Naive thymus-derived CD4-positive, alpha-beta T cell (primary cell): ENCODE measurements at regions of chr2 and their contacts with region 1.

Region 1: GRCh38 chr2:120223034-120223912 is at the start of gene TMEM185B:
- DNase-seq: peak; percentile 83 to 96 (median 90)
- ATAC-seq: peak; percentile 97
- H3K4me3 ChIP-seq: peak within 1 kb of the TSS; percentile 74
- H3K4me3 Mint-ChIP-seq: peak within 1 kb of the TSS; percentile 83 to 91 (median 88)
- H3K27ac ChIP-seq: peak within 1 kb of the TSS; percentile 94
- H3K27ac Mint-ChIP-seq: peak within 1 kb of the TSS; percentile 85 to 92 (median 91)
- H3K4me1 ChIP-seq: peaks cover 20 to 23% of the 10 kb centered on the region in 2 donors
- H3K4me1 Mint-ChIP-seq: peaks cover 34 to 67% (median 56%) of the 10 kb centered on the region in 7 donors
- H3K27me3 ChIP-seq: no peaks in the 10 kb centered on the region
- H3K27me3 Mint-ChIP-seq: no peaks in the 10 kb centered on the region
- total RNA-seq, gene TMEM185B: 14.9 to 36.8 (median 19.5) TPM

Region 2: DNA sequence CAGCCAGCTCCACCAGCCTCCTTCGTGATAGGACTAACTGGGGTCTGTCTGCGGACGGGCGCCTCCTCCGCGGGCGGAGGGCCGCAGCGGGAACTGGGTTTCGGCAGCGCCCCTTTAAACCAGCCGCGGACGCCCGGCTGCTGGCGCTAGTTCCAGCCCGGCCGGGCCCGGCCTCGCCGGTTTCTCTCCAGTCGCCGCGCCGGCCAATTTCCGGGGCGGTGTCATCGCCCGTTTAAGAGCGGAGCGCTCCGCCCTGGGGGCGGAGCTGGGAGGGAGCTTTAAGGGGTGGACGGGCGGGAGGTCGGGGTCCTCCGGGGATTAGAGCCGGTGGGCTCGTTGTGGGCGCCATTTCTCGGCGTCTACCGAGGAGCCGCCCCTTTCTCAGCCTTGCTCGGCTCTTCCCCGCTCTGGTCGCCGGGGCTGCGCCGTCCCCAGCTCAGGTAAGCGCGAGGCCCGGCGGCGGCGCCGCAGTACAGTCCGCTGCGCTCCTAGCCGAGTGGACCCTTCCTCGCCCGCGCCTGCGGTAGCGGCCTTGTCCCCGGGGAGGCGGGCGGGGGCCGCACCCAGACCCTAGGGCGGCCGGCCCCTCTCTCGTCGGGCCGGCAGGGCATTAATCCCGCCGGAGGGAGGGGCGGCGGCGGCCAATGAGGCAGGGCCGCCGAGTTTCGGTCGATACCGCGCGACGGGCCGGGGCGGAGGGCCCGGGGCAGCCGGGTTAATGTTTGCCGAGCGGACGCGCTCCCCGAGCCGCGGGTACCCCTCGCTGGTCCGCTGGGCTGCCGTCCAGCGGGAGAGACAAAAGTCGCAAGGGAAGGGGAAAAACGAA is 210.3 kb before region 1 on chr2 and contains the start of gene EPB41L5:
- CTCF ChIA-PET with region 1: no interaction called
- POLR2A ChIA-PET with region 1: no interaction called
- intact Hi-C with region 1: loop called in 1 of 2 experiments (anchors 2 kb)
- DNase-seq: peak; percentile 56 to 81 (median 67)
- ATAC-seq: peak; percentile 93
- H3K4me3 ChIP-seq: peak within 1 kb of the TSS; percentile 69
- H3K4me3 Mint-ChIP-seq: peak within 1 kb of the TSS; percentile 73 to 89 (median 86)
- H3K27ac ChIP-seq: peak within 1 kb of the TSS; percentile 70
- H3K27ac Mint-ChIP-seq: peak within 1 kb of the TSS in 8 of 9 donors; percentile 36 to 75 (median 70)
- H3K4me1 ChIP-seq: peaks cover 6% of the 10 kb centered on the region in 2 donors
- H3K4me1 Mint-ChIP-seq: peaks cover 8 to 37% (median 24%) of the 10 kb centered on the region in 7 donors
- H3K27me3 ChIP-seq: no peaks in the 10 kb centered on the region
- H3K27me3 Mint-ChIP-seq: peaks cover 0 to 20% (median 0%) of the 10 kb centered on the region in 5 donors
- total RNA-seq, gene EPB41L5: 2.2 to 9.3 (median 6.8) TPM

Region 3: GRCh38 chr2:120077896-120078295 is 145.4 kb before region 1 on chr2:
- CTCF ChIA-PET with region 1: no interaction called
- POLR2A ChIA-PET with region 1: no interaction called
- intact Hi-C with region 1: no loop called
- DNase-seq: no peak
- ATAC-seq: no peak
- H3K4me3 ChIP-seq: no peak overlapping the region
- H3K4me3 Mint-ChIP-seq: no peak overlapping the region
- H3K27ac ChIP-seq: no peak overlapping the region
- H3K27ac Mint-ChIP-seq: peak overlapping the region in 2 of 9 donors; percentile 24 to 38
- H3K4me1 ChIP-seq: no peaks in the 10 kb centered on the region
- H3K4me1 Mint-ChIP-seq: peaks cover 0 to 4% (median 4%) of the 10 kb centered on the region in 7 donors
- H3K27me3 ChIP-seq: no peaks in the 10 kb centered on the region
- H3K27me3 Mint-ChIP-seq: no peaks in the 10 kb centered on the region

Region 4: DNA sequence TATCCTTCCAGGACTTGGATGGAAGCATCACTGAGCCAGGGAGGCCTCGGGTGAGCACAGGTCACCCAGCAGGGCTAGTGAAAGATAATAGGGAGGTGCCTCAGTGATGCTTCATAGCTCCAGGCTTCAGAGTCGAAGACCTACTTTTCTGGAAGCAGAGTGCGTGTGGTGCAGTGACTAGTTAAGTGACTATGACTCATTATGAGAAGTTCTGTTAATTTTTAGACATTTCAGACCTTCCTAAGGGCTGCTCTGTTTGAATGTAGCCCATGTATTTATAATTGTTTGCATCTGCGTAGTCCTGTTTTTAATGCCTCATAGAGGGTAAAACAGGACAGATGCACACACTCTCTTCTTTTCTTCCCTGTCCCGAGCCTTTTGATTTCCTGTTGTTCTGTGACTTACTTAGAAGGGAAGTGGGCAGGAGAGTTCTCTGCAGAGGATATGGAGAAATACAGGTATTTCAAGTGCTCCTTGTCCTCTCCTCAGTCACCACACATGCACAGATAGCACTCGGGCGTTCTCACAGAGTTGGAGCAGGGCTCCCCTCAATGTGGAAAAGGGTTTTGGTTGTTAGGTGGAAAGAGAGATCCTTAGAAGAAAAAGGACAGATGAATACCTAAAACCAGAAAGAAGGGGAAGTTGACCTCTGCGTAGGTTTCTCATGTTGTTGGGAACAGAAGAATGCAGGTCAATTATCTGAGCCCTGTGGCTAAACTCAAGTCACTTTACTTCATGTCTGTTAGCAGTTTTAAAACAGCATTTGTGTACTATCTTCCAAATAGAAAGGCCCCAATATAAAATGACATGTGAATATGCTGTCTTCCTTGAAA is 64.1 kb after region 1 on chr2:
- CTCF ChIA-PET with region 1: no interaction called
- POLR2A ChIA-PET with region 1: no interaction called
- intact Hi-C with region 1: loop called in 1 of 2 experiments (anchors 2 kb)
- DNase-seq: peak in 1 of 9 donors; percentile 34
- ATAC-seq: peak; percentile 63
- H3K4me3 ChIP-seq: no peak overlapping the region
- H3K4me3 Mint-ChIP-seq: peak overlapping the region in 3 of 10 donors; percentile 18 to 86 (median 30)
- H3K27ac ChIP-seq: no peak overlapping the region
- H3K27ac Mint-ChIP-seq: peak overlapping the region in 6 of 9 donors; percentile 28 to 91 (median 64)
- H3K4me1 ChIP-seq: peaks cover 0 to 11% of the 10 kb centered on the region in 2 donors
- H3K4me1 Mint-ChIP-seq: peaks cover 13 to 76% (median 26%) of the 10 kb centered on the region in 7 donors
- H3K27me3 ChIP-seq: no peaks in the 10 kb centered on the region
- H3K27me3 Mint-ChIP-seq: no peaks in the 10 kb centered on the region